GM12878 (cell line): ENCODE measurements at regions of chr12 and their contacts with region 1.

Region 1: DNA sequence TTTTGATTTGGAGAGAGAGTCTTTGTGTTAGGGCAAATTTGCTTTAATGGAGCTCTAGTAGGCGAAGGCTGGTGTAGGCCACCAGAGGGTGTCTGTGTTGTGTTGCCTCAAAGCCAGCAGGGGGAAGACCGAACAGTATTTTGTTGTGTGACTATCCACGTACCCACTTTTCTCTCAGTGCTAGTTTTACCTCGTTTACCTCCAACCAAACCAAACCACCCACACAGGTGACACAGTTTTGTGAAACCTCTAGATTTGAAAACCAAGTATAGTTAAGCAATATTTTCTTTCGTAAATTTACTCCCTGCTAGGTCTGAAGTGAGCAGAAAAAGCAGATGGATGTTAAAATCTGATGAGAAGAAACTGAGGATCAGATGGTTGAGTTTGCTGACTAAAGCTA is 36.3 kb upstream of the NPFF start:
- DNase-seq: peak; percentile 53
- ATAC-seq: peak; percentile 99
- H3K4me3 ChIP-seq: no peak overlapping the region
- H3K27ac ChIP-seq: peak overlapping the region; percentile 34; the same call in 1 of the 2 replicates
- H3K4me1 ChIP-seq: peaks cover 4% of the 10 kb centered on the region; the same call in 1 of the 2 replicates
- H3K27me3 ChIP-seq: no peaks in the 10 kb centered on the region
- CTCF ChIP-seq: peak; percentile 85 to 99 (median 88); a peak in 5 of 6 replicates
- EP300 ChIP-seq: no peak
- POLR2A ChIP-seq: no peak
- RAD21 ChIP-seq: peak; percentile 90

Region 2: DNA sequence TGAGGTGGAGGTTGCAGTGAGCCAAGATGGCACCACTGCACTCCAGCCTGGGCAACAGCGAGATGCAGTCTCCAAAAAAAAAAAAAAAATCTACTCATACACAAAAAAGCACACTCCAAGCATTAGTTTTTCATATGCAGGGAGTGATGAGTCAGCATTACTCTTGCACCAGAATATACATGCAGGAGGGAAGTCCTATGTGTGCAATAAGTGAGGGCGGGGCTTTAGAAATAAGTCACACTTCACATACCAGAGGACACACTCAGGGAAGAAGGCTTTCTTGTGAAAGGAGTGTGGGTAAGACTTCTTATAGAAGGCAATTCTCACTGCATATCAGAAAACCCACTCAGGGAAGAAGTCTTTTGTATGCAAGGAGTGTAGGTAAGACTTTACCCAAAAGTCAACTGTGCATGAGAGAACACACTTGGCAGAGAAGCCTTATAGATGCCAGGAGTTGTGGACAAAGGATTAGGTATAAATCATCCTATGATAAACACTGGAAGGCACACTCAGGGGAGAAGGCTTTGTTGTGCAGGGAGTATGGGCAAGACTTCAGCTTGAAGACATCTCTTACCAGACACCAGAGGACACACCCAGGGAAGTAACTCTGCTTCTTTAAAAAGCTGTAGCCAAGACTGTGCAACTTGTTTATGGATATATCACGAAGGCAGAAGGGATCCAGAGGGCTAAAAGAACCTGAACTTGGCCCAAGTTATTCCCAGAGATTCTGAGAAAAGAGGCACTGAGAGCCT is 32.1 kb after region 1 on chr12:
- CTCF ChIA-PET with region 1: interaction called, 22 read pairs
- POLR2A ChIA-PET with region 1: interaction called, 3 read pairs
- RAD21 ChIA-PET with region 1: interaction called, 11 read pairs
- SMC1A ChIA-PET with region 1: interaction called, 14 read pairs
- in situ Hi-C with region 1: no loop called
- intact Hi-C with region 1: loop called (anchors 2 kb)
- DNase-seq: no peak
- ATAC-seq: no peak
- H3K4me3 ChIP-seq: no peak overlapping the region
- H3K27ac ChIP-seq: no peak overlapping the region
- H3K4me1 ChIP-seq: peaks cover 45% of the 10 kb centered on the region
- H3K27me3 ChIP-seq: no peaks in the 10 kb centered on the region
- CTCF ChIP-seq: no peak
- EP300 ChIP-seq: no peak
- POLR2A ChIP-seq: no peak
- RAD21 ChIP-seq: no peak

Region 3: DNA sequence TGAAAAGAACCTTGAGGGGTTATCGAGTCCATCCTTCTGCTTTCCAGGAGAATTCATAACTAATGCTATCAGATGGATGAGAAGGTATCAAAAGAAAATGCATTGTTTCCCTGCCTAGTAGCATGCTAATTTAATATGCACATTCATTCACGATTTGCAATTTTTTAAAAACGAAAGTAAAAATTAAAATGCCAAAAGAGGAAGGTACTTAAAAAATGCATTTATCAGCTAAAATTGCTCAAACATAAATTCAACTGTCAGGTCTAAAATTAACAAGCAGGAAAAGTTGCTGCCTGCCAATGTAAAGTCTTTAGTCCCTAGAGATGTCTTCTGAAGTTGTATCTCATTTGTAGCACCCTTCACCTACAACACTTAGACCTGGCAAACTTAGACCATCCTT is 74.7 kb after region 1 on chr12:
- CTCF ChIA-PET with region 1: interaction called, 26 read pairs
- POLR2A ChIA-PET with region 1: interaction called, 5 read pairs
- RAD21 ChIA-PET with region 1: interaction called, 39 read pairs
- SMC1A ChIA-PET with region 1: interaction called, 29 read pairs
- in situ Hi-C with region 1: no loop called
- intact Hi-C with region 1: no loop called
- DNase-seq: no peak
- ATAC-seq: peak; percentile 46
- H3K4me3 ChIP-seq: peak overlapping the region; percentile 51
- H3K27ac ChIP-seq: peak overlapping the region; percentile 76
- H3K4me1 ChIP-seq: peaks cover 16% of the 10 kb centered on the region
- H3K27me3 ChIP-seq: no peaks in the 10 kb centered on the region
- CTCF ChIP-seq: no peak
- EP300 ChIP-seq: no peak
- POLR2A ChIP-seq: no peak
- RAD21 ChIP-seq: no peak

Region 4: DNA sequence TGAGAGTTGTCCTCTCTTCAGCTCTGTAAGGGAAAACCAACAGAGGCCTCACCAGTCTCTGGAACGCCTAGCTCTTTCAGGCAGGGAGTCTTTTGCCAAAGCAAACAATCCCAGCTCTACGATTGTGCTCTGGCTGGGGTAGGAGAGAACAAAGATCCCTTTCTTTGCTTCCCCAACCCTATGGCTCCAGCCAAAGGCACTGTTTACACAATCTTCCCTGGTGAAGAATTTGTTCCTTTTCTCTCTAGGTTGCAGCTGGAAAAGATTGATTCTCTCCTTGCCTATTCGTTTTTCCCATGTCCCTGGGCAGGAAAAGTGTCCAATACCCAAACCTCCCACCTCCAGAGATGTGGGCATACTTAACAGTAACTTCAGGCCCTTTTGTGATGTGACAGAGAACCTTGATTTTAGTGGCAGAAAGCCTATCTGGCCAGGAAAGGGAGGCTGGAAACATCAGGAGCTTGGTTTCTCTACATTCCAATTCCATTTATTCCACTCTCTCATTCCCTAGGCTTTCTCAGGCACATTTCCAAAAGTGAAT is 115.5 kb after region 1 on chr12:
- CTCF ChIA-PET with region 1: interaction called, 12 read pairs
- POLR2A ChIA-PET with region 1: no interaction called
- RAD21 ChIA-PET with region 1: interaction called, 8 read pairs
- SMC1A ChIA-PET with region 1: interaction called, 6 read pairs
- in situ Hi-C with region 1: no loop called
- intact Hi-C with region 1: no loop called
- DNase-seq: no peak
- ATAC-seq: no peak; the same call in 2 of the 3 replicates
- H3K4me3 ChIP-seq: no peak overlapping the region
- H3K27ac ChIP-seq: no peak overlapping the region
- H3K4me1 ChIP-seq: peaks cover 5% of the 10 kb centered on the region
- H3K27me3 ChIP-seq: no peaks in the 10 kb centered on the region
- CTCF ChIP-seq: no peak
- EP300 ChIP-seq: no peak
- POLR2A ChIP-seq: no peak
- RAD21 ChIP-seq: no peak

Region 5: GRCh38 chr12:53701518-53702260 is 158.2 kb after region 1 on chr12:
- CTCF ChIA-PET with region 1: interaction called, 16 read pairs
- POLR2A ChIA-PET with region 1: no interaction called
- RAD21 ChIA-PET with region 1: interaction called, 8 read pairs
- SMC1A ChIA-PET with region 1: interaction called, 10 read pairs
- in situ Hi-C with region 1: no loop called
- intact Hi-C with region 1: no loop called
- DNase-seq: peak; percentile 20
- ATAC-seq: peak; percentile 99
- H3K4me3 ChIP-seq: no peak overlapping the region
- H3K27ac ChIP-seq: no peak overlapping the region
- H3K4me1 ChIP-seq: no peaks in the 10 kb centered on the region
- H3K27me3 ChIP-seq: peaks cover 8 to 29% of the 10 kb centered on the region in 2 experiments
- CTCF ChIP-seq: peak; percentile 96 to 99 (median 98); a peak in 5 of 6 replicates
- EP300 ChIP-seq: no peak
- POLR2A ChIP-seq: no peak
- RAD21 ChIP-seq: peak; percentile 92